ENCODE measurements at regions of chr22 and their contacts with region 1.

Region 1: DNA sequence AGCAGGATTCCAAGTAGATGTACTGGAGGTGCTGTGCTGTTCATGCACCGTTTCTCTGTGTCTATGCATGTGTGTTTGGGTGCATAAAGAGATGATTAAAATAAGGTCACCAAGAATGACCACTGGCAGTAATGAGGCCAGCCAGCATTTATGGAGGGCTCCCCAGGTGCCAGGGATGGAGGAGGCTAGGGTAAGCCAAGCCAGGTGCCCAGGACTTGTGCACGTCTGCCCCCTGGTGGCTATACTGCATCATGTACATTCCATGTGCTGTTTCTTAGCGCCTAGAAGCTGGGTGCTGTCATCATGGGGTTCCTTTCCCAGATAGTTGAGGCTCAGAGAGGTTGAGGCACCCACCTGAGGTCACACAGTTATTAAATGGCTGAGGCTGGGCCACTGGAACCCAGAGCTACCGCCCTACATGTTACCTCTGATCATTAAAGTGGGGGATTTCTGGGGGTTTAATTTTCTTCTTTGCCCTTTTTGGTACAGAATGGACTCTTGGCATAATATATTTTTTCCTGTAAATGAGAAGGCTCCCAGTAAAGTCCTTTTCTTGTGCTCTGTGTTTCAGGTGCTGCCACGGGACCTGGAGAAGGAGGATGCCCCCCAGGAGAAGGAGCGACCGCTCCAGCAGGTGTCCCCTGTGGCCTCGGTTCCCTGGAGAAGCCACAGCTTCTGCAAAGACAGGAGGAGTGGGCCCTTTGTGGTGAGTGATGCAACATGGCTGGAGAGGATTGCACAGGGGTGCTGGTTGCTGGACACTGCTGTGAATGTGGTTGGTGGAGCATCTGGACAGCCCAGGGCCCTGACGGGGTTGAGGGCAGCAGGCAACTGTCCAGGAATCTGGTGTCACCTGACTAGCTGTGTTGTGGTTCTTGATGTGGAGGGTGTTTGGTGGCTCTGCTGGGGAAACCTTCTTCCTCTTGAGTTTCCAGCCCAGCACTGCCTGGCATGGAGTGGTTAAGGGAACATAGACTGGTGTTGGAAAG is 96.4 kb downstream of the KIAA1671 start:
- DNase-seq: peak; percentile 79
- H3K4me3 ChIP-seq: no peak overlapping the region
- H3K27ac ChIP-seq: no peak overlapping the region
- H3K4me1 ChIP-seq: no peaks in the 10 kb centered on the region
- H3K27me3 ChIP-seq: no peaks in the 10 kb centered on the region
- CTCF ChIP-seq: peak; percentile 87 to 93 (median 93)
- POLR2A ChIP-seq: no peak

Region 2: GRCh38 chr22:24947881-24948280 is 101.1 kb before region 1 on chr22:
- intact Hi-C with region 1: loop called (anchors 2 kb)
- DNase-seq: no peak
- H3K4me3 ChIP-seq: no peak overlapping the region
- H3K27ac ChIP-seq: no peak overlapping the region
- H3K4me1 ChIP-seq: no peaks in the 10 kb centered on the region
- H3K27me3 ChIP-seq: no peaks in the 10 kb centered on the region
- CTCF ChIP-seq: no peak
- POLR2A ChIP-seq: no peak

Region 3: GRCh38 chr22:24996420-24996952 is 52.5 kb before region 1 on chr22:
- intact Hi-C with region 1: no loop called
- DNase-seq: no peak
- H3K4me3 ChIP-seq: no peak overlapping the region
- H3K27ac ChIP-seq: no peak overlapping the region
- H3K4me1 ChIP-seq: no peaks in the 10 kb centered on the region
- H3K27me3 ChIP-seq: no peaks in the 10 kb centered on the region
- CTCF ChIP-seq: no peak
- POLR2A ChIP-seq: no peak